ENCODE measurements at regions of chr10 and their contacts with region 1.

Region 1: DNA sequence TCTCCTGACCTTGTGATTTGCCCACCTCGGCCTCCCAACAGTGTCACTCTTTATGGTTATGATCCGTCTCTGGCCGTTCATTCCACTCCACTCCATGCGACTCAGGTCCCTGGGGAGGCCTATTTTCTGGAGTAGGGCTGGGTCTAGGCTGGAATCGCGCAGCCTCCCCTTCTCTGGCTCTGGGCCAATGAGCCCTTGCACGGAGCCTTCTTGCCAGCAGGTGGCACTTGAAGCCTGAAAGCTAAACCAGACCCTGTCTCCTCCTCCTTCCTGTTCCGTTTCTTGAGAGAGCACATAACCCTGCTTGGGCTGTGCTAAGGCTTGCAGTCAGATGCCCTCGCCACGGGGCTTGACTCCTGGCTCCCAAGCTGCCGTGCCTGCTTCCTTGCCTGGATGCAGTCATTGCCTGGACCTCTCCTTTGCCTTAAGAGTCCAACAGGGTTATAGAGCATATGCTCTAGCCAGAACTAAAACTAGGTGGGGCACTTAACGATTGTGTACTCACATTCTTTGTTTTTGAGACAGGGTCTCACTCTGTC is 9.6 kb upstream of the DNAJB12 start:
- DNase-seq: peak; percentile 89 to 95 (median 94)
- ATAC-seq: peak; percentile 98
- H3K4me3 ChIP-seq: no peak overlapping the region
- H3K27ac ChIP-seq: peak overlapping the region; percentile 27; the same call in 2 of the 3 replicates
- H3K4me1 ChIP-seq: peaks cover 9 to 11% of the 10 kb centered on the region in 2 experiments; a peak in 4 of 5 replicates
- H3K27me3 ChIP-seq: no peaks in the 10 kb centered on the region
- CTCF ChIP-seq: peak; percentile 95 to 99 (median 99)
- EP300 ChIP-seq: 0 out of 2 replicates have a peak, but pooled peaks have one; percentile 51
- POLR2A ChIP-seq: no peak
- RAD21 ChIP-seq: peak; percentile 98 to 99

Region 2: DNA sequence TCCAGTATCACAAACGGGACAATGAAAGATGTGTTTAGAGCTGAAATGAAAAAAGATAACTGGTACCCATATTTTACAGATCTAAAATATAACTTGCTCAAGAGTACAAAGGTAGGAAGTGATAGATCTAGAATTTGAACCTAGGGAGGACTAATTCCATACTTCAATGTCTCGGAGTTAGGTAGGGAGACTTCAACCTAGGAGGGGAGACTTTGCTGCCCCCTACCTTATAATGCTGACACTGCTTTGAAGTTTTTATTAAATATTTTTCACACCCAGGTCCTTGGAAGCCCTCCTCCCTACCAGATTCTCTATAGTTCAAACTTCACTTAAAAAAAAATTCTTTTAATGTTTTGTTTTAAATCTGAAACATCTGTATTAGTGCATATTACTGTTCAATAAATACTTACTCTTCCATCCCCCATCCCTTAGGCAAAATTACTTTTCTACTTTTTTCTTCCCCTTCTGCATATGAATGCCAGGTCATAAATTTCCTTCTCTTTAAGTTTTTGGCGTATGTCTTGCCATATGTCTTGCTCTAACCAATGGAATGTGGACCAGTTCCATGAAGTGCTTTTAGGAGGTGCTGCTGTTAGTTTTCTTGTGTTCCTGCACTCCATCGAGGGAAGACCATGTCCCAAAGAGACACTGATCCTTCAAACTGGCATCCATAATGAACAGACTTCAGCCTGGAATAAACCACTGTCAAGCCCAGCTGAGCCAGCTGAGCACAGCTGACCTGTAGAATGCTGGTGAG is 203.8 kb after region 1 on chr10:
- CTCF ChIA-PET with region 1: interaction called, 5 read pairs
- POLR2A ChIA-PET with region 1: no interaction called
- in situ Hi-C with region 1: loop called (anchors 5 kb)
- intact Hi-C with region 1: loop called (anchors 1 kb)
- DNase-seq: peak; percentile 41 to 64 (median 48)
- ATAC-seq: peak; percentile 95
- H3K4me3 ChIP-seq: no peak overlapping the region
- H3K27ac ChIP-seq: no peak overlapping the region
- H3K4me1 ChIP-seq: no peaks in the 10 kb centered on the region
- H3K27me3 ChIP-seq: no peaks in the 10 kb centered on the region
- CTCF ChIP-seq: peak; percentile 47 to 77 (median 67); a peak in 5 of 6 replicates
- EP300 ChIP-seq: no peak
- POLR2A ChIP-seq: no peak
- RAD21 ChIP-seq: peak; percentile 43 to 62; a peak in 3 of 4 replicates

Region 3: DNA sequence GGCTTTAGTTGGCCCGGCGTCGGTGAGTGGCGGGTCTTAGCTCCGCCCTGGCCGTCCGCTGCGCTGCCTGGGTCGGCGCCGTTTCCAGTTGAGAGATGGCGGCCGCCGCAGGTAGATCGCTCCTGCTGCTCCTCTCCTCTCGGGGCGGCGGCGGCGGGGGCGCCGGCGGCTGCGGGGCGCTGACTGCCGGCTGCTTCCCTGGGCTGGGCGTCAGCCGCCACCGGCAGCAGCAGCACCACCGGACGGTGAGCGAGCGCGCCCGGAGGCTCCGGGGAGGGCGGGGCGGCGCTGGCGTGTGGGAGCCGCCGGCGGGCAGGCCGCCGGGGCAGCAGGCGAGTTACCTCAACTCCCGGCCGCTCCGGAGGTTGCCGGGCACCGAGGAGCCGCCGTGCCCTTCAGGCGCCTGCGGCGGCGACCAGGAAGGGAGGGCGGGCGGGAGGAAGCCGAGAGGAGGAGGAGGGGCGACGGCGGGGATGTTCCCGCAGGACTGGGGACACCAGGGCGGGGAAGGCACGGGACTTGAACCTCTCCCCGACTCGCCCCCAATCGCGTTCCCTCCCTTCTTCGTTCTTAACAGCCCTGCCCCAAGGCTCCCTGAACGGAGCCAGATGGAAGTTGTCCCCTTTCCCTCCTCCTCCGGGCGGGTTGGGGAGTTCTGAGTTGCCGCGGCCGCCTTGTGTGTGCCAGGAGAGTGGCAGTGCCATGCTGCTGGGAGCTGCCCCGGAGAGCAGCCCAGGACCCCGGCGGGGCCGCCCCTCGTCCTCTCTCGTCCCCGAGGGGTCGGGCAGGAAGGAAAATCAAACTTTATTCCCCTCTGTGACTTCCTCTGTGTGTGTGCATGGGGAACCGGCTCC is 328.0 kb after region 1 on chr10 and contains the start of gene MCU:
- CTCF ChIA-PET with region 1: no interaction called
- POLR2A ChIA-PET with region 1: interaction called, 3 read pairs
- in situ Hi-C with region 1: no loop called
- intact Hi-C with region 1: loop called (anchors 10 kb)
- DNase-seq: peak; percentile 95 to 98 (median 96)
- ATAC-seq: peak; percentile 98
- H3K4me3 ChIP-seq: peak within 1 kb of the TSS; percentile 71
- H3K27ac ChIP-seq: peak within 1 kb of the TSS; percentile 72
- H3K4me1 ChIP-seq: peaks cover 25 to 44% of the 10 kb centered on the region in 2 experiments
- H3K27me3 ChIP-seq: no peaks in the 10 kb centered on the region
- CTCF ChIP-seq: no peak
- EP300 ChIP-seq: no peak
- POLR2A ChIP-seq: peak; percentile 86
- RAD21 ChIP-seq: peak in 1 of 2 experiments; percentile 24; a peak in 1 of 4 replicates
- polyA plus RNA-seq, gene MCU: 8.2 to 11.1 TPM

Region 4: GRCh38 chr10:72834183-72834825 is 470.0 kb after region 1 on chr10:
- CTCF ChIA-PET with region 1: interaction called, 77 read pairs
- POLR2A ChIA-PET with region 1: interaction called, 6 read pairs
- in situ Hi-C with region 1: loop called (anchors 5 kb)
- intact Hi-C with region 1: loop called (anchors 1 kb)
- DNase-seq: peak; percentile 17 to 78 (median 40)
- ATAC-seq: peak; percentile 85
- H3K4me3 ChIP-seq: no peak overlapping the region
- H3K27ac ChIP-seq: no peak overlapping the region
- H3K4me1 ChIP-seq: peaks cover 5 to 8% of the 10 kb centered on the region in 2 experiments; a peak in 4 of 5 replicates
- H3K27me3 ChIP-seq: no peaks in the 10 kb centered on the region
- CTCF ChIP-seq: peak; percentile 69 to 92 (median 74)
- EP300 ChIP-seq: no peak
- POLR2A ChIP-seq: no peak
- RAD21 ChIP-seq: peak; percentile 93 to 97

Region 5: DNA sequence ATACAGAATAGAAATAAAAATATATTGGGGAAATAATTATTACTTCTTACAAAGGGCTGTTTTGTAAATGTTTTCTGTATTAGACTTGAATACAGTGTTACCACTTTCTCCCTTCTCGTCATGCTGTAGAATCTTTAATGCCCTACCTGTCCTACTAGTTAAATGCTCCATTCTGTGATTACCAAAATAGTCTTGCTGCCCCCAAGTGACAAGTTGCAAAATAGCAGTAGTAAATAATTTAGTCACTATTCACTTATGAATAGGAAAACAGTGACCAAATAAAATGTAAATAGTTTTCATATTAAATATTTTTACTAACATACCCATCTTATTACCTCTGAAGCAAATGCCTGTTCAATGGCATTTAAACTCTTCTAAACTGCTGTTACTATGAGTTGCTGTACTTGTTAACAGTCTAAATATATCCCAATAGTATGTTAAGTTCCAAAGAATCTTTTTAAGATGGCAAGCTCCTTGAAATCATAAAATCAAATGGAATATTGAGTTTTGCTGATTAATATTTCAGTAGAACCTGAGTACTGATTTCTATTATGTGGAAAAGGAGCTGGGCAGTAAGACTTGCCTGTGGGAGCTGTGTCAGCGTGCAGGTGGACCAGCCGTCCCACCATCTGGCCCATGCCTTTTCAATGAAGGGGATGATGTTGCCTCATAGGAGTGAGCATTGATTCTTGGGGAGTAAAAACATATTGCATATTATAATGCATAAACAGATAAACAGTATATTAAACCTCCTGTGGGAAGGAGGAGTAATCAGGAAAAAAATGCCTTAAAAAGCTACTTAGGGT is 511.1 kb after region 1 on chr10:
- CTCF ChIA-PET with region 1: interaction called, 24 read pairs
- POLR2A ChIA-PET with region 1: no interaction called
- in situ Hi-C with region 1: no loop called
- intact Hi-C with region 1: loop called (anchors 2 kb)
- DNase-seq: peak in 2 of 4 experiments; percentile 38 to 55
- ATAC-seq: peak; percentile 71; the same call in 2 of the 3 replicates
- H3K4me3 ChIP-seq: no peak overlapping the region
- H3K27ac ChIP-seq: no peak overlapping the region
- H3K4me1 ChIP-seq: no peaks in the 10 kb centered on the region
- H3K27me3 ChIP-seq: no peaks in the 10 kb centered on the region
- CTCF ChIP-seq: peak; percentile 55 to 91 (median 55); a peak in 5 of 6 replicates
- EP300 ChIP-seq: no peak
- POLR2A ChIP-seq: no peak
- RAD21 ChIP-seq: peak; percentile 73 to 92

Region 6: GRCh38 chr10:73060738-73061635 is 696.7 kb after region 1 on chr10:
- CTCF ChIA-PET with region 1: interaction called, 4 read pairs
- POLR2A ChIA-PET with region 1: no interaction called
- in situ Hi-C with region 1: loop called (anchors 10 kb)
- intact Hi-C with region 1: loop called (anchors 2 kb)
- DNase-seq: peak; percentile 33 to 56 (median 44)
- ATAC-seq: peak; percentile 90
- H3K4me3 ChIP-seq: no peak overlapping the region
- H3K27ac ChIP-seq: no peak overlapping the region
- H3K4me1 ChIP-seq: no peaks in the 10 kb centered on the region
- H3K27me3 ChIP-seq: no peaks in the 10 kb centered on the region
- CTCF ChIP-seq: peak; percentile 47 to 64 (median 48)
- EP300 ChIP-seq: no peak
- POLR2A ChIP-seq: no peak
- RAD21 ChIP-seq: peak; percentile 24 to 82; a peak in 3 of 4 replicates

Region 7: GRCh38 chr10:73159038-73159648 is 794.8 kb after region 1 on chr10:
- CTCF ChIA-PET with region 1: interaction called, 5 read pairs
- POLR2A ChIA-PET with region 1: no interaction called
- in situ Hi-C with region 1: no loop called
- intact Hi-C with region 1: loop called (anchors 5 kb)
- DNase-seq: peak; percentile 54 to 79 (median 64)
- ATAC-seq: peak; percentile 82
- H3K4me3 ChIP-seq: no peak overlapping the region
- H3K27ac ChIP-seq: peak overlapping the region; percentile 1; the same call in 1 of the 3 replicates
- H3K4me1 ChIP-seq: no peaks in the 10 kb centered on the region; a peak in 1 of 5 replicates
- H3K27me3 ChIP-seq: no peaks in the 10 kb centered on the region
- CTCF ChIP-seq: peak; percentile 55 to 90 (median 80); a peak in 5 of 6 replicates
- EP300 ChIP-seq: no peak
- POLR2A ChIP-seq: no peak
- RAD21 ChIP-seq: peak; percentile 80 to 83

Measured in K562 (cell line).